ENCODE measurements at regions of chr4 and their contacts with region 1.

Region 1: GRCh38 chr4:4507923-4508322 is 33.9 kb downstream of the STX18 start:
- DNase-seq: no peak
- H3K4me3 ChIP-seq: no peak overlapping the region
- H3K27ac ChIP-seq: no peak overlapping the region
- H3K4me1 ChIP-seq: no peaks in the 10 kb centered on the region
- H3K27me3 ChIP-seq: no peaks in the 10 kb centered on the region
- CTCF ChIP-seq: peak; percentile 48 to 51

Region 2: GRCh38 chr4:4541661-4542570 is 34.0 kb after region 1 on chr4 and contains the start of gene STX18:
- CTCF ChIA-PET with region 1: no interaction called
- dilution Hi-C with region 1: loop called (anchors 5 kb)
- in situ Hi-C with region 1: no loop called
- intact Hi-C with region 1: no loop called
- DNase-seq: peak; percentile 85
- H3K4me3 ChIP-seq: peak within 1 kb of the TSS; percentile 71 to 92 (median 80)
- H3K27ac ChIP-seq: peak within 1 kb of the TSS; percentile 87
- H3K4me1 ChIP-seq: peaks cover 10% of the 10 kb centered on the region
- H3K27me3 ChIP-seq: no peaks in the 10 kb centered on the region
- CTCF ChIP-seq: peak in 1 of 2 donors; percentile 23
- total RNA-seq, gene STX18: 17.7 to 25.0 TPM

Region 3: DNA sequence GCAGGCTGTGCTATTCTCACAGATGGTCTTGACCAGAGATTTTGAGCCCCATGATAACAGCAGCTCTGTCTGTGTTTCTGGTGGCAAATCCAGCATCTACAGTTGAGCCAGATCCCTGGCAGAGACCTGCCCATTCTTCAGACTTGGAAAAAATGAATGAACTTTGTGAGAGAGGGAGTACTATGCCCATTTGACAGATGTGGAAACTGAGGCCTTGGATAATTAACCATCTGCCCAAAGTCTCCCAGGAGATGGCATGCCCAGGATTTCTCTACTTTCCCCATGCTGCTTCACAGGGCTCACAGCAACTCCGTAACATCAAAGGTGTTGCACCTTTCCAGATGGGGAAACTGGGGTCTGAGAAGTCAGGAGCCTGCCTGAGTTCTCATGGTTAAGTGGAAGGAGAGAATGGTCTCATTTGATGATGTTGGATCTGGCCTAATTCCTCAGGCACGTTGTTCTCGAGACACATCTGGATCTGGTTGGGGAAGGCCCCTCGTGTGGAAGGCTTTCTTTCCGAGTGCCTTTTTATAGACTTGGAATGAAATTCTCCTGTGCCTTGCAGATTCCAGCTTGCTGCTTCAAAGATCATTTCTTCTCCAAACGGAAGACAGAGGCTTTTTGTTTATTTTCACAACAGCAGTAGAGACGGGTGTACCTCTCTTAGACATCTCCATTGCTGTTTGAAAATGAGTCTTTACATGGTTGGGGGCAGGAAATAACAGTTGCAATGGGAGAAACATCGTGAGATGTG is 107.2 kb after region 1 on chr4:
- CTCF ChIA-PET with region 1: no interaction called
- dilution Hi-C with region 1: no loop called
- in situ Hi-C with region 1: no loop called
- intact Hi-C with region 1: no loop called
- DNase-seq: no peak
- H3K4me3 ChIP-seq: no peak overlapping the region
- H3K27ac ChIP-seq: no peak overlapping the region
- H3K4me1 ChIP-seq: no peaks in the 10 kb centered on the region
- H3K27me3 ChIP-seq: no peaks in the 10 kb centered on the region
- CTCF ChIP-seq: no peak